T-cell (primary cell): ENCODE measurements at regions of chr15 and their contacts with region 1.

Region 1: GRCh38 chr15:65792130-65792987 is at the start of gene DENND4A:
- DNase-seq: peak; percentile 97 to 99 (median 98)
- ATAC-seq: peak; percentile 83 to 86 (median 86)
- H3K4me3 ChIP-seq: peak within 1 kb of the TSS; percentile 86 to 97
- H3K4me3 Mint-ChIP-seq: peak within 1 kb of the TSS; percentile 86 to 91 (median 89)
- H3K27ac ChIP-seq: peak within 1 kb of the TSS; percentile 99
- H3K27ac Mint-ChIP-seq: peak within 1 kb of the TSS; percentile 93 to 95
- H3K4me1 ChIP-seq: peaks cover 22 to 27% of the 10 kb centered on the region in 2 experiments
- H3K4me1 Mint-ChIP-seq: peaks cover 43 to 60% (median 59%) of the 10 kb centered on the region in 3 donors
- H3K27me3 ChIP-seq: no peaks in the 10 kb centered on the region
- H3K27me3 Mint-ChIP-seq: no peaks in the 10 kb centered on the region
- total RNA-seq, gene DENND4A: 49.7 to 76.3 (median 57.1) TPM

Region 2: GRCh38 chr15:65767895-65768294 is 24.5 kb before region 1 on chr15:
- CTCF ChIA-PET with region 1: interaction called in 1 of 2 experiments, 3 read pairs
- POLR2A ChIA-PET with region 1: interaction called in 1 of 2 experiments, 14 read pairs
- DNase-seq: peak in 2 of 35 experiments; percentile 8 to 34
- ATAC-seq: peak; percentile 44 to 83 (median 66)
- H3K4me3 ChIP-seq: no peak overlapping the region
- H3K4me3 Mint-ChIP-seq: no peak overlapping the region
- H3K27ac ChIP-seq: no peak overlapping the region
- H3K27ac Mint-ChIP-seq: peak overlapping the region in 1 of 2 donors; percentile 9
- H3K4me1 ChIP-seq: peaks cover 3 to 16% of the 10 kb centered on the region in 2 experiments
- H3K4me1 Mint-ChIP-seq: peaks cover 57 to 70% (median 66%) of the 10 kb centered on the region in 3 donors
- H3K27me3 ChIP-seq: no peaks in the 10 kb centered on the region
- H3K27me3 Mint-ChIP-seq: no peaks in the 10 kb centered on the region

Region 3: GRCh38 chr15:65777053-65777452 is 15.3 kb before region 1 on chr15:
- CTCF ChIA-PET with region 1: interaction called in 1 of 2 experiments, 4 read pairs
- POLR2A ChIA-PET with region 1: interaction called, 8 to 30 read pairs
- DNase-seq: no peak
- ATAC-seq: no peak
- H3K4me3 ChIP-seq: no peak overlapping the region
- H3K4me3 Mint-ChIP-seq: no peak overlapping the region
- H3K27ac ChIP-seq: no peak overlapping the region
- H3K27ac Mint-ChIP-seq: peak overlapping the region in 1 of 2 donors; percentile 31
- H3K4me1 ChIP-seq: peaks cover 10 to 48% of the 10 kb centered on the region in 2 experiments
- H3K4me1 Mint-ChIP-seq: peaks cover 36 to 52% (median 46%) of the 10 kb centered on the region in 3 donors
- H3K27me3 ChIP-seq: no peaks in the 10 kb centered on the region
- H3K27me3 Mint-ChIP-seq: no peaks in the 10 kb centered on the region

Region 4: GRCh38 chr15:65818927-65819562 is 26.7 kb after region 1 on chr15:
- CTCF ChIA-PET with region 1: interaction called, 6 to 34 read pairs
- POLR2A ChIA-PET with region 1: interaction called, 20 to 98 read pairs
- DNase-seq: peak in 5 of 35 experiments; percentile 21 to 89 (median 36)
- ATAC-seq: peak; percentile 90 to 95 (median 92)
- H3K4me3 ChIP-seq: no peak overlapping the region
- H3K4me3 Mint-ChIP-seq: peak overlapping the region; percentile 62 to 79 (median 63)
- H3K27ac ChIP-seq: peak overlapping the region; percentile 94
- H3K27ac Mint-ChIP-seq: peak overlapping the region; percentile 96 to 97
- H3K4me1 ChIP-seq: peaks cover 26 to 52% of the 10 kb centered on the region in 2 experiments
- H3K4me1 Mint-ChIP-seq: peaks cover 58 to 64% (median 61%) of the 10 kb centered on the region in 3 donors
- H3K27me3 ChIP-seq: no peaks in the 10 kb centered on the region
- H3K27me3 Mint-ChIP-seq: no peaks in the 10 kb centered on the region

Region 5: GRCh38 chr15:65829130-65829770 is 36.9 kb after region 1 on chr15:
- CTCF ChIA-PET with region 1: interaction called, 3 to 26 read pairs
- POLR2A ChIA-PET with region 1: interaction called, 7 to 14 read pairs
- DNase-seq: peak in 9 of 35 experiments; percentile 17 to 73 (median 26)
- ATAC-seq: peak; percentile 44 to 58 (median 45)
- H3K4me3 ChIP-seq: no peak overlapping the region
- H3K4me3 Mint-ChIP-seq: peak overlapping the region; percentile 57 to 79 (median 58)
- H3K27ac ChIP-seq: peak overlapping the region; percentile 79
- H3K27ac Mint-ChIP-seq: peak overlapping the region; percentile 95 to 98
- H3K4me1 ChIP-seq: peaks cover 45 to 65% of the 10 kb centered on the region in 2 experiments
- H3K4me1 Mint-ChIP-seq: peaks cover 62 to 72% (median 69%) of the 10 kb centered on the region in 3 donors
- H3K27me3 ChIP-seq: no peaks in the 10 kb centered on the region
- H3K27me3 Mint-ChIP-seq: no peaks in the 10 kb centered on the region

Region 6: DNA sequence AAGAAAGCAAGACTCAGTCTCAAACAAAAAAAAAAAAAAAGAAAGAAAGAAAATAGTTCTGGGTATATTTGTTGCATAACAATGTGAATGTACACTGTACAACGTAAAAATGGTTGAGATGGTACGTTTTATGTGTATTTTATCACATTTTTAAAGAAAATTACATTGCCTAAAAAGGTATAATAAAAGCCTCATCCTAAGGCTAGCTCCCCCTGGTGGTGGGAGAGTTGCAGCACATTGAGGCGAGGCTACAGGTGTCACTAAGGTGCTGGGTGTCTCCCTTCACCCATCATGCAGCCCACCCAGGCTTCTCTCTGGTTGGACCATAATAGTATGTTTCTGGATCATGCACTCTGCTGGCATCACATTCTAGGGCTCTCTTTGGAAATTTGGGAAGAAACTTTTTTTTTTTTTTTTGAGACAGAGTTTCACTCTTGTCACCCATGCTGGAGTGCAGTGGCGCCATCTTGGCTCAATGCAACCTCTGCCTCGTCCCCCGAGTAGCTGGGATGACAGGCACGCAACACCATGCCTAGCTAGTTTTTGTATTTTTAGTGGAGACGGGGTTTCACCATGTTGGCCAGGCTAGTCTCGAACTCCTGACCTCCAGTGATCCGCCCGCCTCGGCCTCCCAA is 64.6 kb after region 1 on chr15:
- CTCF ChIA-PET with region 1: interaction called, 7 to 10 read pairs
- POLR2A ChIA-PET with region 1: interaction called, 6 read pairs
- DNase-seq: peak; percentile 57 to 91 (median 78)
- ATAC-seq: peak; percentile 50 to 86 (median 78)
- H3K4me3 ChIP-seq: no peak overlapping the region
- H3K4me3 Mint-ChIP-seq: no peak overlapping the region
- H3K27ac ChIP-seq: no peak overlapping the region
- H3K27ac Mint-ChIP-seq: peak overlapping the region in 1 of 2 donors; percentile 39
- H3K4me1 ChIP-seq: peaks cover 2 to 6% of the 10 kb centered on the region in 2 experiments
- H3K4me1 Mint-ChIP-seq: peaks cover 6 to 15% (median 7%) of the 10 kb centered on the region in 3 donors
- H3K27me3 ChIP-seq: no peaks in the 10 kb centered on the region
- H3K27me3 Mint-ChIP-seq: no peaks in the 10 kb centered on the region

Region 7: GRCh38 chr15:65869127-65869953 is 77.0 kb after region 1 on chr15 and contains the start of gene RAB11A:
- CTCF ChIA-PET with region 1: interaction called, 6 to 7 read pairs
- POLR2A ChIA-PET with region 1: interaction called in 1 of 2 experiments, 14 read pairs
- DNase-seq: peak; percentile 88 to 96 (median 93)
- ATAC-seq: peak; percentile 93 to 94 (median 94)
- H3K4me3 ChIP-seq: peak within 1 kb of the TSS; percentile 89 to 99
- H3K4me3 Mint-ChIP-seq: peak within 1 kb of the TSS; percentile 95 to 100 (median 98)
- H3K27ac ChIP-seq: peak within 1 kb of the TSS; percentile 98
- H3K27ac Mint-ChIP-seq: peak within 1 kb of the TSS; percentile 97
- H3K4me1 ChIP-seq: peaks cover 0 to 27% of the 10 kb centered on the region in 2 experiments
- H3K4me1 Mint-ChIP-seq: peaks cover 28 to 39% (median 35%) of the 10 kb centered on the region in 3 donors
- H3K27me3 ChIP-seq: no peaks in the 10 kb centered on the region
- H3K27me3 Mint-ChIP-seq: no peaks in the 10 kb centered on the region
- total RNA-seq, gene RAB11A: 82.4 to 103 (median 97.5) TPM